Natural killer cell (primary cell): ENCODE measurements at regions of chr16 and their contacts with region 1.

Region 1: DNA sequence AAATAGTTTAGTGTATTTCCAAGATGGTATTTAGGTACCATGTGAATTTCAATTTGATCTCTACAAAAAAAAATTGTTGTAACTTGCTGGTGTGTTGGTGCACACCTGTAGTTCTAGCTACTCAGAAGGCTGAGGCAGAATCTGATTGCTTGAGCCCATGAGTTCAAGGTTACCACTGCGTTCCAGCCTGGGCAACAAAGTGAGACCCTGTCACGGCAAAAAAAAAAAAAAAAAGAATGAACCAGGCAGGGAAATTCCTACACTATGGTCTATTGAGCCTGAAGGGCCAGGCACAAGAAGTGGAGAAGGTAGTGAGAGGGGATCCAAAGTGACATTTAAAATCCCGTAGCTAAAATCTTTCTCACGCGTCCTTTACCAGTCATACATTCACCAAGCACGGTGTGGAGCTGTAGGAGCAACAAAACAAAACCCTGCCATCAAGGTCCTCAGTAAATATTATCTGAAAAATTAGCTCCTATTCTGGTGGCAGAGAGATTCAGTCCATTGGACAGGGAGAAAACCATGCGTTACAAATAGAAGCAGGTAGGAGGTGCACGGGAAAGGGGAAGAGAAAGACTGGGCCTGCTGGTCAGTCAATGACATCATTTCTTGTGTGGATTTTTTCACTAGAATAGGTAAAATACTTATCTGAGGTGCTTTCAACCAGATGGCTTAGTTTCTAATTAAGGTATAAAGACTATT is 27.3 kb downstream of the TXNDC11 start:
- DNase-seq: no peak
- ATAC-seq: no peak
- H3K4me3 ChIP-seq: no peak overlapping the region
- H3K4me3 Mint-ChIP-seq: no peak overlapping the region
- H3K27ac ChIP-seq: no peak overlapping the region
- H3K27ac Mint-ChIP-seq: no peak overlapping the region
- H3K4me1 ChIP-seq: peaks cover 3% of the 10 kb centered on the region
- H3K4me1 Mint-ChIP-seq: peaks cover 5 to 12% of the 10 kb centered on the region in 2 donors
- H3K27me3 ChIP-seq: no peaks in the 10 kb centered on the region
- H3K27me3 Mint-ChIP-seq: no peaks in the 10 kb centered on the region
- CTCF ChIP-seq: no peak

Region 2: DNA sequence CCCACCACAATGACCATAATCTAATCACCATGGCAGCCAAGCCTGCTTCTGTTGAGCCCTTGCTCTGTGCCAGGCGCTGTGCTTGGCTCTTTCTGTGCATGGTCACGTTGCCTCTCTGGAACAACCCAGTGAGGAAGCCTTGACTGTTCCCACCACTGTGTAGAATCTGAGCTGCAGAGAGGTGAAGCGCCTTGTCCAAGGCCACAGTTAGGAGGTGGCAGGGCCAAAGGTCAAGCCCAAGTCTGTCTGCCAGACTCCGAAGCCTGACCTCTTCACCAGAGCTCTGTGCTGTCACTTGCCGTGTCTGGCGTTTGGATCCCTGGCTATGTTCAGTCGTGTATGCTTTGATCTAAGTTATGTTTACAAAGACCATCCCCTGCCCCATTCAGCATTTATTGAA is 760.5 kb before region 1 on chr16:
- intact Hi-C with region 1: loop called (anchors 1 kb)
- DNase-seq: no peak
- ATAC-seq: no peak
- H3K4me3 ChIP-seq: no peak overlapping the region
- H3K4me3 Mint-ChIP-seq: no peak overlapping the region
- H3K27ac ChIP-seq: no peak overlapping the region
- H3K27ac Mint-ChIP-seq: peak overlapping the region in 1 of 2 donors; percentile 3
- H3K4me1 ChIP-seq: peaks cover 16% of the 10 kb centered on the region
- H3K4me1 Mint-ChIP-seq: peaks cover 12 to 23% of the 10 kb centered on the region in 2 donors
- H3K27me3 ChIP-seq: no peaks in the 10 kb centered on the region
- H3K27me3 Mint-ChIP-seq: no peaks in the 10 kb centered on the region
- CTCF ChIP-seq: no peak

Region 3: DNA sequence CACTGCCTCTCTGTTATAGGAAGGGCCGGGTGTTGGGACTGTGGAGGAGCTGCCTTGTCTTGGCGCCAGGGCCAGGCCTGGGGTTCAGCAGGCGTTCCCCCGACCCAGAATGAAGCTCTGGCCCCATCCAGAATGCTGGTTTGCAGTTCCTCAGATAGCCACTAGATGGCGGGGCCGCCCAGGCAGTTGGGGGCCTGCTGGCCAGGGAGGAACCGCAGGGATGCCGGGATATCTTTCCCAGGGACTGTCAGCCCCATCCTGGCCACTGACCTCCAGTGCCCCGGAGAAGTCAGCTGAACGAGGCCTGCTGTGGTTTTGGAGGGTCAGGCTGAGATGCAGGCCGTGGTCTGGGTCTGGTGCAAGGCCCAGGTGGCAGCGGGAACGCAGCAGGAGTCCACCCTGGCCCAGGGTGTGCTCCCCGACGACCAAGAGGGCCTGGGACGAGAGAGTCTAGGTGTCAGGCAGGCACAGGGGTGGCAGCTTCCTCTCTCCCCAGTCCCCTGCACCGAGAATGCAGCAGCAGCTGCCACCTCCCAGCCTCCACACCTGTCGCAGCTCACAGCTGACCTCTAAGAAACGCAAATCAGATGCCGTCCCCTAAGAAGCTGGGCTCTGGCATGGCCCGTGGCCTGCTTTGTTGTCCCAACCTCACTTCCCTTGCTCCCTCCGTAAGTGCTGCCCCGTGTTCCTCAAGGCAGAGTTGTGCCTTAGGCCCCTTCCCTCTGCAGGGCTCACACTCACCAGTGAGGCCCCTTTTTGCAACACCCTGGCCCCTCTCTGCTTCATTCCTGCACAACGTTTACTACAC is 319.0 kb before region 1 on chr16:
- intact Hi-C with region 1: loop called (anchors 1 kb)
- DNase-seq: peak; percentile 63 to 77
- ATAC-seq: peak; percentile 68 to 83 (median 80)
- H3K4me3 ChIP-seq: no peak overlapping the region
- H3K4me3 Mint-ChIP-seq: no peak overlapping the region
- H3K27ac ChIP-seq: no peak overlapping the region
- H3K27ac Mint-ChIP-seq: no peak overlapping the region
- H3K4me1 ChIP-seq: no peaks in the 10 kb centered on the region
- H3K4me1 Mint-ChIP-seq: no peaks in the 10 kb centered on the region
- H3K27me3 ChIP-seq: no peaks in the 10 kb centered on the region
- H3K27me3 Mint-ChIP-seq: no peaks in the 10 kb centered on the region
- CTCF ChIP-seq: peak; percentile 99

Region 4: DNA sequence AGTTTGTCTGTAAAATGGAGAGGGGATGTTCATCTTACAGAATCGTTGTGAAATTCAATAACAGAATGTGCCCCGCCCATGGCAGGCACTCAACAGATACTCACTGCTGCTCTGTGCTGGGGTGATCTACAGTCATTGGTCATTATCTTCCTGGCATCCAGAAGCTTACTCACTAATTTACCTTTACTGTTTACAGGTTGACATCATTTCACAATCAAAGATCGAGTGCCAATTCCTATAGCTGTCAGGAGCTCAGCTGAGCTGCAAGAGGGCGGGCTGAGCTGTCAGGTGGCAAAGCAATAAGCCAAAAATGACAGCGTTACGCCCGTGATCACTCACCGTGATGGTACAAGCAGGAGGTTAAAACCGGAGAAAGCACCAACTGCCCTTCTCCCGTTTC is 179.9 kb before region 1 on chr16:
- intact Hi-C with region 1: loop called (anchors 1 kb)
- DNase-seq: no peak
- ATAC-seq: no peak
- H3K4me3 ChIP-seq: no peak overlapping the region
- H3K4me3 Mint-ChIP-seq: peak overlapping the region; percentile 50
- H3K27ac ChIP-seq: no peak overlapping the region
- H3K27ac Mint-ChIP-seq: peak overlapping the region in 1 of 2 donors; percentile 45
- H3K4me1 ChIP-seq: peaks cover 43% of the 10 kb centered on the region
- H3K4me1 Mint-ChIP-seq: peaks cover 45 to 46% of the 10 kb centered on the region in 2 donors
- H3K27me3 ChIP-seq: no peaks in the 10 kb centered on the region
- H3K27me3 Mint-ChIP-seq: peaks cover 8% of the 10 kb centered on the region in 2 donors
- CTCF ChIP-seq: no peak